PC-9 (cell line): ENCODE measurements at regions of chr15 and their contacts with region 1.

Region 1: DNA sequence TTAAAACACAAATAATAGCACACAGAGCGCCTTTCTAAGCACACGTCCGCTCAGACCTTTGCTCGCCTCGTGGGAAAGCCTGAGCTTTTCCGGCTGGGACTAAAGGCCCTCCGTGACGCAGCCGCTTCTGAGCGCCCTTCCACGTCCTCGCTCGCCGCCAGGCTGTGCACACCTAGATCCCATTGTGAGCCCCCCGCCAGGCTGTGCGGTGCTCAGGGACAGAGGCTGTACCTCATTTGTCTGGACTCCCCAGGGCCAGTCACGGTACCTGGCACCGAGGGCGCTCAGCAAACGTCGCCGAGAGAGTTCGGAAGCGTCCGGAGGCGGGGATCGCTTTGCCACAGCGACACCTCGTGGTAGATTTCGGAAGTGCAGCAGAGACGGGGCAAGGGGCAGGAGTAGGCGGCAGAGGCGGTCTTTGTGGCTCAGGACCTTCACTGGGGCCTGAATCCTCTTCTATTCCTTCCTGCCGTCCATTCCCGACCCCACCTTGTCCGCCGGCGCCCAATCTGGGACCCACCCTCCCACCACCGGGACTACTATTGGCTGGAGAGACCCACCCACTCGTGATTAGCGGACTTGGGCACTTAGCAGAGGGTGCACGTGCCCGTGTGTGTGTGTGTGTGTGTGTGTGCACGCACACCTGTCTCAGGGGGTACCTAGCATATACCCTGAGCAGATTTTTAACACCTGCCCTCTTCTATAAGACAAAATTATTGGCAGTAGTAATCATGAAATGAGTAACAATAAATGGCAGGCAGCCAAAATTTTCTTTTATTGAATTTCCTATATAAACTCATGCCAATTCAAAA is 65.6 kb downstream of the RHCG start:
- DNase-seq: peak in 1 of 2 experiments; percentile 82
- H3K4me3 ChIP-seq: peak overlapping the region; percentile 54
- H3K27ac ChIP-seq: no peak overlapping the region
- H3K4me1 ChIP-seq: peaks cover 12% of the 10 kb centered on the region; the same call in 1 of the 2 replicates
- H3K27me3 ChIP-seq: peaks cover 5% of the 10 kb centered on the region
- CTCF ChIP-seq: peak; percentile 97

Region 2: GRCh38 chr15:89321521-89322410 is 109.0 kb before region 1 on chr15:
- CTCF ChIA-PET with region 1: no interaction called
- POLR2A ChIA-PET with region 1: no interaction called
- intact Hi-C with region 1: no loop called
- DNase-seq: no peak
- H3K4me3 ChIP-seq: no peak overlapping the region
- H3K27ac ChIP-seq: no peak overlapping the region
- H3K4me1 ChIP-seq: no peaks in the 10 kb centered on the region
- H3K27me3 ChIP-seq: no peaks in the 10 kb centered on the region
- CTCF ChIP-seq: no peak

Region 3: DNA sequence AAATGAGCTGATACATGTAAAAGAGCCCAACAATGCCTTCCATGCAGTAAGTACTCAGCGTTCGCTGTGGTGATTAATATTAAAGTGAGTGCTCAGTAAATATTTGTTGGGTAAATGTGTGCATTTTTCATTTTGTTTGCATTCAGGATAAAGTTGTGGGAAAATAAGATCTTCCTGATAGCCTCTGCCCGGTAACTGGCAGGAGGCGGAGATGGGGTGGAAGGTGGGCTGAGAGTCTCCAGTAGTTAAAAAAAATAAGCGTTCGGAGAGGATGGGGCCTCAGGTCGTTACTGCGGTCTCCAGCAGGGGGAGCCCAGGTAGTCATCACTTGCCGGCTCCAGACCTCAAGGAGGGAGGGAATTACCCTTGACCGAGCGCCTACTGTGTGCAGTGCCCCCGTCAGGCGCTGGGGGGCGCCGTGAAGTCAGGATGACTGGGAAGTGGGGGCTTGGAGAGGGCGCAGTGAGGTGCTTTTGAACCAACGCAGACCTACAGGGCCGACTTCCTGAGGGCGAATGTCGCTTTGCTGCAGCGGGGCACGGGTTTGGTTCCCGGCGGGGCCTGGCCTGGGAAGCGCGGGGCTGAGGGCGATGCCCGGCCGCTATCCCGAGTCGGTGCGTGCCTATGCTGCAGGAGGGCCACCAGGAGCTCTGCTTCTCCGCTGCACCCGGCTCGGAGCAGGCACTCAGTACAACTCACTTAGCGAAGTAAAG is 14.4 kb before region 1 on chr15:
- CTCF ChIA-PET with region 1: interaction called, 11 read pairs
- POLR2A ChIA-PET with region 1: no interaction called
- intact Hi-C with region 1: no loop called
- DNase-seq: peak; percentile 56 to 60
- H3K4me3 ChIP-seq: no peak overlapping the region
- H3K27ac ChIP-seq: no peak overlapping the region
- H3K4me1 ChIP-seq: no peaks in the 10 kb centered on the region
- H3K27me3 ChIP-seq: peaks cover 69% of the 10 kb centered on the region
- CTCF ChIP-seq: peak; percentile 94

Region 4: DNA sequence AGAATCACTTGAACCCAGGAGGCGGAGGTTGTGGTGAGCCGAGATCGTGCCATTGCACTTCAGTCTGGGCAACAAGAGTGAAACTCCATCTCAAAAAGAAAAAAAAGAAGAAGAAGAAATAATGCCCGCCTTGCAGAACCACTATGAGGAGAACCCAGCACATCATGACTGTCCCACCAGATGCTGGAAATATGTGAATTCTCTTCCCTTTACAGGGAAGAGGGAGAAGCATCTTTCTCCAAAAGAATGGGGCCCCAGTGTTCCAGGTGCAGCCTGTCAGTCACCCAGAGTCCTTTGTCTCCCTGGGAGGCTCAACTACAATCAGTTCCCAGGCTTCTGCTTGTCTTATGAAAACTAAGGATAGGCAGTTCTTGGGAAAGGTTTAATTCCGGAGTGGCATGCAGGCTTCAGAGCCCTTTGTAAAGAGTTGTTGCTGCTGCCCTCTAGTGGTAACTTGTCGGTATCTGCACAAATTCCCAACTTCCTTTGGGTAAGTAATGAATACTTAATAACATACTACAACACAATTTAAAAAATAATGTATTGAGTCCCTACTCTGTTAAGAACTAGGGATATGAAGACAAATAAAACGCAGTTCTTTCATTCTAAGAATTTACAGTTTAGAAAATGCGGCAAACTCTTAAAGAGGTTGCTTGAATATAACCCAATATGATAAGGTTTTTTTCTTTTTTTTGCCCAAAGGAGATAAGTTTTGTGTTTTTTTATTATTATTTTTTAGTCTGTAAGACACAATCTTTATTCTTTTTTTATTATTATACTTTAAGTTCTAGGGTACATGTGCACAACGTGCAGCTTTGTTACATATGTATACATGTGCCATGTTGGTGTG is 125.9 kb after region 1 on chr15:
- CTCF ChIA-PET with region 1: no interaction called
- POLR2A ChIA-PET with region 1: no interaction called
- intact Hi-C with region 1: loop called (anchors 5 kb)
- DNase-seq: peak; percentile 56 to 77
- H3K4me3 ChIP-seq: no peak overlapping the region
- H3K27ac ChIP-seq: no peak overlapping the region
- H3K4me1 ChIP-seq: peaks cover 4% of the 10 kb centered on the region
- H3K27me3 ChIP-seq: no peaks in the 10 kb centered on the region
- CTCF ChIP-seq: peak; percentile 85

Region 5: GRCh38 chr15:89704411-89704810 is 273.7 kb after region 1 on chr15:
- CTCF ChIA-PET with region 1: no interaction called
- POLR2A ChIA-PET with region 1: no interaction called
- intact Hi-C with region 1: no loop called
- DNase-seq: no peak
- H3K4me3 ChIP-seq: no peak overlapping the region
- H3K27ac ChIP-seq: no peak overlapping the region
- H3K4me1 ChIP-seq: no peaks in the 10 kb centered on the region
- H3K27me3 ChIP-seq: no peaks in the 10 kb centered on the region
- CTCF ChIP-seq: no peak